ENCODE measurements at regions of chr7 and their contacts with region 1.

Region 1: DNA sequence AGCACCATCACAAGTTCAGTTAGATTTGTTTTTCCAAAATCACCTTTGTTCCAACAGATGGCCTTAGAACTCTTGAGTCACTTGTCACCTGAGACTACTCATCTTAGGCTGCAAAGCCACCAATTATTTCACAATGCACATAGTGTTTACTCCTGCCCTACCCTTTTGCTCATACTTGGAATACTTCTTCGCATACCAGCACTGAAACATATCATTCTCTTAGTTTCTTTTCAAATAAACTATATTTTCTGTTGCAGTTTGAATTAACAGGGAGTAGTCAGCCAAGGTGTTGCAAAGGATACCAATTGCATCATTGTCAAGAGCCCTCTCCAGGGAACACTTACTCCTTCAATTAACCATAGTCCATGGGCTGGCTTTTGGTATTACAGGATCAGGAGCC is 71.0 kb downstream of the CASD1 start:
- DNase-seq: peak; percentile 46 to 98
- H3K4me3 ChIP-seq: no peak overlapping the region
- H3K27ac ChIP-seq: peak overlapping the region; percentile 88
- H3K4me1 ChIP-seq: peaks cover 60% of the 10 kb centered on the region
- H3K27me3 ChIP-seq: no peaks in the 10 kb centered on the region
- CTCF ChIP-seq: no peak

Region 2: DNA sequence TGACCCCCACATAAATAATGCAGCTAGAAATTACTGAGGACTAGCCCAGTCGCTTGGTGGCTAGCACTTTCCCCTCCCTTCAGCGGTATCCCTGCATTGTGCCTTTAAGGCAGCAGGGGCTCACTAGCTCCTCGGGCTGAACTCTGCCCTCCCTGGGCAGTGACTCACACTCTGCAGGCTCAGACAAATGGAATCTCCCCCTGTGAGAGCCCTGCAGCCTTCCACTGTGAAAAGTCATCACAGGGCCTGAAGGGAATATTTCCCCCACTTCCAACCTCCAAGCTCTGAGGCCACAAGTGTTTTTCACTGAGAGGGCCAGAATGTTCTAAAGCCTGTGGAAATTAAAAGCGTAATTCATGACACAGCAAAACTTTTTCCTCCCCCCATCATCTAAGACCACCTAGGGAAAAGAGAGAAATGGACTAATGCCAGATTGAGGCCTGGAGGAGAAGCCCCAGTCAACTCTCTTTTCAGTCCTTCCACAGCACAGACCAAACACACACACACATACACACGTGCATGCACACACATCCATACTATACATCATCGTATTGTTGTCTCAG is 279.5 kb before region 1 on chr7:
- CTCF ChIA-PET with region 1: no interaction called
- POLR2A ChIA-PET with region 1: no interaction called
- intact Hi-C with region 1: loop called (anchors 5 kb)
- DNase-seq: peak; percentile 87 to 88
- H3K4me3 ChIP-seq: 0 out of 2 replicates have a peak overlapping the region, but pooled peaks have one; percentile 2
- H3K27ac ChIP-seq: peak overlapping the region; percentile 86
- H3K4me1 ChIP-seq: peaks cover 31% of the 10 kb centered on the region
- H3K27me3 ChIP-seq: no peaks in the 10 kb centered on the region
- CTCF ChIP-seq: peak; percentile 15; the same call in 1 of the 2 replicates

Region 3: GRCh38 chr7:94509879-94510581 is 70.6 kb before region 1 on chr7:
- CTCF ChIA-PET with region 1: no interaction called
- POLR2A ChIA-PET with region 1: no interaction called
- intact Hi-C with region 1: loop called (anchors 1 kb)
- DNase-seq: peak; percentile 58 to 75
- H3K4me3 ChIP-seq: peak overlapping the region; percentile 81
- H3K27ac ChIP-seq: peak overlapping the region; percentile 69
- H3K4me1 ChIP-seq: peaks cover 33% of the 10 kb centered on the region
- H3K27me3 ChIP-seq: no peaks in the 10 kb centered on the region
- CTCF ChIP-seq: no peak

Region 4: GRCh38 chr7:94632338-94633013 is 51.9 kb after region 1 on chr7:
- CTCF ChIA-PET with region 1: no interaction called
- POLR2A ChIA-PET with region 1: interaction called, 5 read pairs
- intact Hi-C with region 1: loop called (anchors 1 kb)
- DNase-seq: peak; percentile 21 to 55
- H3K4me3 ChIP-seq: no peak overlapping the region
- H3K27ac ChIP-seq: no peak overlapping the region
- H3K4me1 ChIP-seq: peaks cover 5% of the 10 kb centered on the region; the same call in 1 of the 2 replicates
- H3K27me3 ChIP-seq: no peaks in the 10 kb centered on the region
- CTCF ChIP-seq: no peak

Region 5: GRCh38 chr7:94643771-94644540 is 63.4 kb after region 1 on chr7:
- CTCF ChIA-PET with region 1: no interaction called
- POLR2A ChIA-PET with region 1: interaction called, 7 read pairs
- intact Hi-C with region 1: loop called (anchors 1 kb)
- DNase-seq: peak; percentile 34 to 62
- H3K4me3 ChIP-seq: no peak overlapping the region
- H3K27ac ChIP-seq: no peak overlapping the region
- H3K4me1 ChIP-seq: no peaks in the 10 kb centered on the region; the same call in 1 of the 2 replicates
- H3K27me3 ChIP-seq: no peaks in the 10 kb centered on the region
- CTCF ChIP-seq: no peak

Region 6: GRCh38 chr7:94697035-94697974 is 116.7 kb after region 1 on chr7:
- CTCF ChIA-PET with region 1: no interaction called
- POLR2A ChIA-PET with region 1: no interaction called
- intact Hi-C with region 1: loop called (anchors 1 kb)
- DNase-seq: peak; percentile 64 to 76
- H3K4me3 ChIP-seq: peak overlapping the region; percentile 28; the same call in 1 of the 2 replicates
- H3K27ac ChIP-seq: peak overlapping the region; percentile 80
- H3K4me1 ChIP-seq: peaks cover 40% of the 10 kb centered on the region
- H3K27me3 ChIP-seq: no peaks in the 10 kb centered on the region
- CTCF ChIP-seq: no peak

Measured in PC-9 (cell line).